Activated CD4-positive, alpha-beta T cell treated with anti-CD3 and anti-CD28 coated beads for 36 hours (primary cell): ENCODE measurements at regions of chr10 and their contacts with region 1.

Region 1: DNA sequence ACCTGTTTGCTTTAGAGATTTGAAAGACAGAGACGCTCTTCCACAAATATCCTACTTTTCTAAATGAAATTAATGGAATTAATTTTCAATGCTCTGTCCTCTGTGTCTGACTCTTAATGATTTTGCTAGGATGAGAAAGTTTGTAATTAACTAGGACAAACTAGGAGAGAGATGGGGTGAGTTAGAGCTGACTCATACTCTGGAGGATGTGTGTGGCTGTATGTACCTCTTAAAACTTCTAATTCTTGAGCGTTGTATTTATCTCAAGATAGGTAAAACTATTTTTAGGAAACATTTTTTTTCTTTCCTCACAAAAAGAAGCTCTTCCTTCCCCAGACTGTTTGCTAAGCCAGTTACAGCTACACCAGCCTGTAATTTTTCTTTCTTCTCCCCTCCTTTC is 178.8 kb upstream of the ANKRD30A start:
- DNase-seq: no peak
- ATAC-seq: no peak
- H3K4me3 Mint-ChIP-seq: no peak overlapping the region
- H3K27ac Mint-ChIP-seq: no peak overlapping the region
- H3K4me1 Mint-ChIP-seq: no peaks in the 10 kb centered on the region
- H3K27me3 Mint-ChIP-seq: no peaks in the 10 kb centered on the region

Region 2: GRCh38 chr10:36899651-36900050 is 46.9 kb before region 1 on chr10:
- CTCF ChIA-PET with region 1: no interaction called
- POLR2A ChIA-PET with region 1: no interaction called
- intact Hi-C with region 1: loop called in 1 of 2 experiments (anchors 5 kb)
- DNase-seq: no peak
- ATAC-seq: no peak
- H3K4me3 Mint-ChIP-seq: no peak overlapping the region
- H3K27ac Mint-ChIP-seq: no peak overlapping the region
- H3K4me1 Mint-ChIP-seq: no peaks in the 10 kb centered on the region
- H3K27me3 Mint-ChIP-seq: no peaks in the 10 kb centered on the region

Region 3: GRCh38 chr10:36989233-36989632 is 42.6 kb after region 1 on chr10:
- CTCF ChIA-PET with region 1: no interaction called
- POLR2A ChIA-PET with region 1: no interaction called
- intact Hi-C with region 1: no loop called
- DNase-seq: no peak
- ATAC-seq: no peak
- H3K4me3 Mint-ChIP-seq: no peak overlapping the region
- H3K27ac Mint-ChIP-seq: no peak overlapping the region
- H3K4me1 Mint-ChIP-seq: no peaks in the 10 kb centered on the region
- H3K27me3 Mint-ChIP-seq: no peaks in the 10 kb centered on the region

Region 4: GRCh38 chr10:37240227-37240626 is 293.6 kb after region 1 on chr10:
- CTCF ChIA-PET with region 1: no interaction called
- POLR2A ChIA-PET with region 1: no interaction called
- intact Hi-C with region 1: no loop called
- DNase-seq: no peak
- ATAC-seq: no peak
- H3K4me3 Mint-ChIP-seq: no peak overlapping the region
- H3K27ac Mint-ChIP-seq: no peak overlapping the region
- H3K4me1 Mint-ChIP-seq: no peaks in the 10 kb centered on the region
- H3K27me3 Mint-ChIP-seq: no peaks in the 10 kb centered on the region

Region 5: DNA sequence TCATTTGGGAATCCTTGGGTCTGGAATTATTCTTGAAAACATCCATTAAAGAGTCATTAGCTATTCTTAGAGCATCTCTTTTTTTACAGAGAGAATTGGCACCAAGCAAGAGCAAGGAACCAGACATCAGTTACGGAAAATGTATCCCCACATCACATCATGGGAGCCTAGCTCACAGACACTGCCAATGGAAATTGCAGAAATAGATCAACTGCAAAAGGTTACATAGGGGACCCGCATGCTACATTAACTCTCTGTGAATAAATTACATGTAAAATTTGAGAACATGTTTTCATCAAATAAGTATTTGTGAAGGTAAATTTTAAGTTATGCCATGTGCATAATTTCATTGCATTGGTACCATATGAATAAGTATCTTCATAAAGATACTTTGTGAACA is 686.0 kb after region 1 on chr10:
- CTCF ChIA-PET with region 1: no interaction called
- POLR2A ChIA-PET with region 1: no interaction called
- intact Hi-C with region 1: no loop called
- DNase-seq: no peak
- ATAC-seq: no peak
- H3K4me3 Mint-ChIP-seq: no peak overlapping the region
- H3K27ac Mint-ChIP-seq: no peak overlapping the region
- H3K4me1 Mint-ChIP-seq: no peaks in the 10 kb centered on the region
- H3K27me3 Mint-ChIP-seq: no peaks in the 10 kb centered on the region